ENCODE measurements at regions of chr3 and their contacts with region 1.

Region 1: DNA sequence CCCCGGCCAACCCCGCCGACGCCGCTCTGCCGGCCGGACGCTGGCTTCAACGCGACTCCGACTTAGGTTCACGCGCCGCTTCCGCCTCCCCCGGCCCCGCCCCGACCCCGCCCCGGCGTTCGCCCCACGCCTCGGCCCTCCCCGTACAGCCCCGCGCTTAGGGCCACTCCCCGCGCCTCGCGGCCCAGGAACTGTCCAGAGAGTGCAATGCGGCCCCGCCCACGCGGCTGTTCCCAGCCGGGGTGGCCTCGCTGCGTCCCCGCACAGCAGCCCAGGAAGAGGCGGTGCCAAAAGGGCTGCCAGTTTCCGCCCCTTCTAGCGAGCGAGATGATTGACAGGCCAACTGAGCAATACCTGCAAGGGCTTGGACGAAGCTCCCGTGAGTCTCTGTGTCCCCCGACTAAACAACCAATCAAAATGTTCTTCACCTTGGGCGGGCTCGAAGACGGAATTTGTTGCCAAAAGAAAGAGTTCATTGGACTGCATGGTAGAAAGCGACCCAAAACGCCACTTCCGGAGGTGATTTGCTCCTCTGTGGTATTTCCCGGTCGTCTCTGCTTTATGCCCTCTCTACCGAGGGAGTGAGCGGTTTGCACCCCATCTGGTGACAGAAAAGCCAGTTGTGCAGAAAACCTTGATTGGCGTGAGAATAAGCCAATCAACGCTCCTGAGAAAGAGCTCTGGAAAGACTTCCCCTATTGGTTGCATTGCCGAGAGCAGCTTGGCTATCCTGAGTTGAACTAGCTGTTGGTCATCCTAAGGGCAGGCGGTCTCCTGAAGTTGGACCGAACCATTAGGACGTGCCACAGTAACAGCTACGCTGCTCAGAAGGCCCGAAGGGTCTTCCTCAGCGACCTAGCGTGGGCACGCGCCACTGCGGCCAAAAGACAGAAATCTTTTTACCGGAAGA is at the start of gene UBP1:
- DNase-seq: peak; percentile 88 to 99 (median 96)
- ATAC-seq: peak; percentile 85 to 86 (median 86)
- H3K4me3 ChIP-seq: peak within 1 kb of the TSS; percentile 93 to 95
- H3K4me3 Mint-ChIP-seq: peak within 1 kb of the TSS; percentile 95 to 100 (median 99)
- H3K27ac ChIP-seq: peak within 1 kb of the TSS; percentile 99
- H3K27ac Mint-ChIP-seq: peak within 1 kb of the TSS; percentile 100
- H3K4me1 ChIP-seq: peaks cover 18 to 23% of the 10 kb centered on the region in 2 experiments
- H3K4me1 Mint-ChIP-seq: peaks cover 48 to 53% (median 49%) of the 10 kb centered on the region in 3 donors
- H3K27me3 ChIP-seq: no peaks in the 10 kb centered on the region
- H3K27me3 Mint-ChIP-seq: no peaks in the 10 kb centered on the region
- total RNA-seq, gene UBP1: 87.3 to 101 (median 91.4) TPM

Region 2: DNA sequence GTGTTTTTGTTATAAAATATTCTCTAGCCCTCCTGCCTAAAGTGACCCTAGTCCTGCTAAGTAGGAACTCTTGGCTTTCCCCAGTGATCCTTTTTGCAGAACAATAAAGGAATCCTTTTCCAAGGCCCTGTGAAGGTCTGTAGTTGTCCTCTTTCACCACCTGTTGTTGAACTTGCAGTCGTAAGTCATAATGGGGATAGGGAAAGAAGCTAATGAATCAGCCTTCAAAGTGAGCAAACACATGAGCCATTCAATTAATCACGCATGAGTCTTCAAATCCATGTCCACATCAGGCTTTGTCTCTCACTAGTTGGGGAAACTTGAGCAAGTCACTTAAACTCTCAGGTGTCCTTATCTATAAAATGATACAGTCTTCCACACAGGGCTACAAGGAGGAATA is 1431.5 kb before region 1 on chr3:
- CTCF ChIA-PET with region 1: no interaction called
- POLR2A ChIA-PET with region 1: no interaction called
- DNase-seq: no peak
- ATAC-seq: no peak
- H3K4me3 ChIP-seq: no peak overlapping the region
- H3K4me3 Mint-ChIP-seq: no peak overlapping the region
- H3K27ac ChIP-seq: no peak overlapping the region
- H3K27ac Mint-ChIP-seq: no peak overlapping the region
- H3K4me1 ChIP-seq: peaks cover 0 to 5% of the 10 kb centered on the region in 2 experiments
- H3K4me1 Mint-ChIP-seq: peaks cover 4 to 9% (median 8%) of the 10 kb centered on the region in 3 donors
- H3K27me3 ChIP-seq: peaks cover 0 to 15% of the 10 kb centered on the region in 2 experiments
- H3K27me3 Mint-ChIP-seq: peaks cover 17 to 19% of the 10 kb centered on the region in 2 donors

Region 3: DNA sequence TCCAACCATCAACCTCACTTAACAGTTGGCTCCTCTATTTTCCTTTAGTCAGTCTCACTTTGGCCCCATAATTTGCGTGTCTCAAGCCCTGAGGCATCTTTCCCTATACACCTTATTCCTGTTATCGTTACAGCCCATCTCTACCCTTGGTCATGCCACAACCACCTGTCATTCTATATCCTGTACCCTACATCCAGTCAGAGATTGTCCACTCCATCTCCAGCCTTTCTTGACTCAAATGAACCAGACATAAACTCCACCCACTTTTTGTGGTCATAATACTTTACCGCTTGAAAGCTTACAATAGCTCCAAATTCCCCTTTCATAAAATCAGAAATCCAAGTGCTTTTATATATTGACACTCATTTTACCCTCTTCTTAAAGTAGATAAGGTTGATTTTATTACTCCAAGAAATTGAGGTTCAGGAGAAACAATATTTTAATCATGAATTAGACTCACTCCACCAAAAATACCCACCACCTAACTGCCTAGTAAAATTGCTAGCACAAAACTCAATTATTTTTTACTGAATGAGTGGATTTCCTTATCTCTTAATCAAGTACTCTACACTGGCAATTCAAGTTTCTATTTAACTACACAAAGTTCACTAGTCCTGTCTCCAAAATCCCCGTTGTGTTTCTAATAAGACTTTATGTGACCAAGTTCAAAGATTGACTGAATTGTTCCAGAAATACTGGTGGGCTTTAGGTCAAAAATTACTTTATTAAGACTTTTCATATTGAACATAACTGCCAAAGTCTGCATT is 480.0 kb before region 1 on chr3:
- CTCF ChIA-PET with region 1: no interaction called
- POLR2A ChIA-PET with region 1: no interaction called
- DNase-seq: peak in 1 of 35 experiments; percentile 58
- ATAC-seq: peak in 2 of 4 experiments; percentile 21 to 22
- H3K4me3 ChIP-seq: no peak overlapping the region
- H3K4me3 Mint-ChIP-seq: peak overlapping the region in 2 of 3 donors; percentile 3 to 37
- H3K27ac ChIP-seq: peak overlapping the region; percentile 44
- H3K27ac Mint-ChIP-seq: peak overlapping the region; percentile 53 to 58
- H3K4me1 ChIP-seq: peaks cover 19 to 21% of the 10 kb centered on the region in 2 experiments
- H3K4me1 Mint-ChIP-seq: peaks cover 40 to 66% (median 41%) of the 10 kb centered on the region in 3 donors
- H3K27me3 ChIP-seq: no peaks in the 10 kb centered on the region
- H3K27me3 Mint-ChIP-seq: no peaks in the 10 kb centered on the region

Region 4: DNA sequence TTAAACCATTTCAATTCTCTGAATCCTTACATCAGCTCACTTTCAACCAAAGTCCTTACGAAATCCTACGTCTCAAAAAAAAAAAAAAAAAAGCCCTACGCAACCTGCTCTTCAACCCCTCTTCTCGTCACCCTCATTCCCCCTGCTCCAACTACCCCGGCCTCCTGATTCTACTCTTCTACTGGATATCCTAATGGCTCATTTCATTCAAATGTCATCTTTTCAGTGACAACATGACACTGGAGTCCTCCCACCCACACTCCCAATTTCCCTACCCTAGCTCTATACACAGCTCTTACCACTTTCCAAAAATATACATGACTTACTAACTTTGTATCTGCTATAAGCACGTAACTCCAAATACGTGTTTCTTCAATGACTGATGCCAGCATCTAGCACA is 11.8 kb before region 1 on chr3:
- CTCF ChIA-PET with region 1: interaction called, 4 to 11 read pairs
- POLR2A ChIA-PET with region 1: interaction called in 1 of 2 experiments, 7 read pairs
- DNase-seq: no peak
- ATAC-seq: no peak
- H3K4me3 ChIP-seq: no peak overlapping the region
- H3K4me3 Mint-ChIP-seq: peak overlapping the region in 1 of 3 donors; percentile 15
- H3K27ac ChIP-seq: no peak overlapping the region
- H3K27ac Mint-ChIP-seq: no peak overlapping the region
- H3K4me1 ChIP-seq: peaks cover 10 to 24% of the 10 kb centered on the region in 2 experiments
- H3K4me1 Mint-ChIP-seq: peaks cover 69 to 73% (median 71%) of the 10 kb centered on the region in 3 donors
- H3K27me3 ChIP-seq: no peaks in the 10 kb centered on the region
- H3K27me3 Mint-ChIP-seq: no peaks in the 10 kb centered on the region

Region 5: DNA sequence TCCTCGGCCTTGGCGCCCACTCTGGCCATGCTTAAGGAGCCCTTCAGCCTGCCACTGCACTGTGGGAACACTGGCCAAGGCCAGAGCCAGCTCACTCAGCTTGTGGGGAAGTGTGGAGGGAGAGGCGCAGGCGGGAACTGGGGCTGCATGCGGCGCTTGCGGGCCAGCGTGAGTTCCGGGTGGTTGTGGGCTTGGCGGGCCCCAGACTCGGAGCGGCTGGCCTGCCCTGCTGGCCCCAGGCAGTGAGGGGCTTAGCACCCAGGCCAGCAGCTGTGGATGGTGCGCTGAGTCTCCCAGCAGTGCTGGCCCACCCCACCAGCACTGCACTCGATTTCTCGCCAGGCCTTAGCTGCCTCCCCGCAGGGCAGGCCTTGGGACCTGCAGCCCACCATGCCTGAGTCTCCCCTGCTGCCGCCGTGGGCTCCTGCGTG is 12.8 kb after region 1 on chr3:
- CTCF ChIA-PET with region 1: no interaction called
- POLR2A ChIA-PET with region 1: no interaction called
- DNase-seq: no peak
- ATAC-seq: no peak
- H3K4me3 ChIP-seq: no peak overlapping the region
- H3K4me3 Mint-ChIP-seq: no peak overlapping the region
- H3K27ac ChIP-seq: no peak overlapping the region
- H3K27ac Mint-ChIP-seq: no peak overlapping the region
- H3K4me1 ChIP-seq: no peaks in the 10 kb centered on the region
- H3K4me1 Mint-ChIP-seq: peaks cover 3 to 7% (median 3%) of the 10 kb centered on the region in 3 donors
- H3K27me3 ChIP-seq: no peaks in the 10 kb centered on the region
- H3K27me3 Mint-ChIP-seq: no peaks in the 10 kb centered on the region

Measured in T-cell (primary cell).